HCT116 (cell line): ENCODE measurements at regions of chr9 and their contacts with region 1.

Region 1: DNA sequence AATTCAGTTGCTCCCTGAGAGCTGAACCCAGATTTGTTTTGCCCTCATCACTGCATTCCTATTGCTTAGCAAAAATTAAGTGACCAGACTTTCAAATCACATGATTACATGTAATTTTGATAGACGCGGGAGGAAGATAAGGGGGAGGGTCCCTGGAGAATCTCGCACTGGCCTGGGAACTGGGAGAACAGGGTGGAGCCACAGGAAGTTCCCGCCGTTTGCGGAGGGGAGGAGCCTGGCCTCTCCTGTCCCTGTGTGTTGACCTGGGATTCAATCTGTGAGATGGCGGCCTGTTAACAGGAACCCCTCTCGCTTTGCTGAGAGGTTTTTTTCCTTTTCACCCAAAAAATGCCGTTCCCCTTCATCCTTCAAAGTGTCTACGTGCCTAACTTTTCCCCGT is 142.9 kb upstream of the OR13F1 start:
- DNase-seq: no peak
- ATAC-seq: no peak
- H3K4me3 ChIP-seq: no peak overlapping the region
- H3K27ac ChIP-seq: no peak overlapping the region
- H3K4me1 ChIP-seq: no peaks in the 10 kb centered on the region
- H3K27me3 ChIP-seq: 0 out of 2 replicates have a peak, but pooled peaks cover 6% of the 10 kb centered on the region
- CTCF ChIP-seq: no peak
- POLR2A ChIP-seq: no peak
- RAD21 ChIP-seq: no peak

Region 2: DNA sequence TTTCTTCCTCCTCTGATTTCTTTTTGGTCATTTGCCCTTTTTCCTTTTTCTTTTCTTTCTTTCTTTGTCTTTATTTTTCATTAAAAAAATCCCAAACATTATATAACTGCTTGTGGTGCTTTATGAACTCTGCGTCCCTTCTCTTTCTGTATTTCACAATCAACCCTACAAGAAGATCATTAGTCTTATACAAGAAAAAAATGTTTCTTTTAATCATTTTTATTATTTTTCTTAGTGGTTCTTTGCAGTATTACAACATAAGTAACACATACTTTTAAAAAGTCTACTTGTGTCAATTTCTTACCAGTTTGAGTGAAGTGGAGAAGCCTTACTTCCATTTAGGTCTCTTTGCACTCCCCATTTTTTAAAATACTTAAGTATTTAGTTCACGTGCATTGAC is 479.8 kb before region 1 on chr9:
- CTCF ChIA-PET with region 1: no interaction called
- POLR2A ChIA-PET with region 1: no interaction called
- RAD21 ChIA-PET with region 1: no interaction called
- intact Hi-C with region 1: no loop called
- DNase-seq: no peak
- ATAC-seq: no peak
- H3K4me3 ChIP-seq: no peak overlapping the region
- H3K27ac ChIP-seq: no peak overlapping the region
- H3K4me1 ChIP-seq: no peaks in the 10 kb centered on the region
- H3K27me3 ChIP-seq: no peaks in the 10 kb centered on the region
- CTCF ChIP-seq: no peak
- POLR2A ChIP-seq: no peak
- RAD21 ChIP-seq: no peak

Region 3: DNA sequence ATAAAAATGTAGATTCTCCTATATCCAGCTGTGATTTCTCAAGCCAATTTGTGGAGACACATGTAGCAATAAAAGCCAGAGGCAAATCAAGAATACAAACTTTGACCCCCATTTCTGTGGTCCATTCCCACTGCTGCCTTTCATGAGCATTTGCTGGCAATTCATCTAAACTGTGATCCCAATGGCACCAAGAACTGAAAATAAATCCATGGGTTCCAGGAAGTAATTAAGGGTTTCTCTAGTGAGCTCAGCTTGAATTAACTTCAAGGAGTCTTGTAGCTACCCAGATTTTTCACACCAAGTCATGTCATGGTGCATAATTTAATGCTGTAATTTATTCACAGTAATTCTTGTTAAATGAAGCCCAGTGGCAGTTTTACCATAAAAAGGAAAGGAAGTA is 412.1 kb before region 1 on chr9:
- CTCF ChIA-PET with region 1: no interaction called
- POLR2A ChIA-PET with region 1: no interaction called
- RAD21 ChIA-PET with region 1: no interaction called
- intact Hi-C with region 1: loop called (anchors 5 kb)
- DNase-seq: no peak
- ATAC-seq: no peak
- H3K4me3 ChIP-seq: no peak overlapping the region
- H3K27ac ChIP-seq: no peak overlapping the region
- H3K4me1 ChIP-seq: no peaks in the 10 kb centered on the region
- H3K27me3 ChIP-seq: no peaks in the 10 kb centered on the region
- CTCF ChIP-seq: no peak
- POLR2A ChIP-seq: no peak
- RAD21 ChIP-seq: no peak

Region 4: GRCh38 chr9:104293877-104294276 is 67.3 kb before region 1 on chr9:
- CTCF ChIA-PET with region 1: no interaction called
- POLR2A ChIA-PET with region 1: no interaction called
- RAD21 ChIA-PET with region 1: no interaction called
- intact Hi-C with region 1: no loop called
- DNase-seq: no peak
- ATAC-seq: no peak
- H3K4me3 ChIP-seq: no peak overlapping the region
- H3K27ac ChIP-seq: no peak overlapping the region
- H3K4me1 ChIP-seq: no peaks in the 10 kb centered on the region
- H3K27me3 ChIP-seq: 0 out of 2 replicates have a peak, but pooled peaks cover 4% of the 10 kb centered on the region
- CTCF ChIP-seq: no peak
- POLR2A ChIP-seq: no peak
- RAD21 ChIP-seq: no peak